Activated CD8-positive, alpha-beta memory T cell treated with anti-CD3 and anti-CD28 coated beads, Interleukin-2, amount 10 ng/mL, durations not matched to agents 7 days and 5 days (primary cell): ENCODE measurements at regions of chr13 and their contacts with region 1.

Region 1: GRCh38 chr13:95301183-95301967 is at the start of gene ABCC4:
- DNase-seq: peak; percentile 66
- ATAC-seq: peak; percentile 95
- H3K4me3 Mint-ChIP-seq: peak within 1 kb of the TSS; percentile 84
- H3K27ac Mint-ChIP-seq: no peak within 1 kb of the TSS
- H3K4me1 Mint-ChIP-seq: peaks cover 22% of the 10 kb centered on the region
- H3K27me3 Mint-ChIP-seq: peaks cover 12% of the 10 kb centered on the region
- total RNA-seq, gene ABCC4: 6.4 to 7.7 TPM

Region 2: GRCh38 chr13:95327190-95327589 is 25.8 kb after region 1 on chr13:
- CTCF ChIA-PET with region 1: no interaction called
- DNase-seq: no peak
- ATAC-seq: no peak
- H3K4me3 Mint-ChIP-seq: no peak overlapping the region
- H3K27ac Mint-ChIP-seq: no peak overlapping the region
- H3K4me1 Mint-ChIP-seq: no peaks in the 10 kb centered on the region
- H3K27me3 Mint-ChIP-seq: peaks cover 2% of the 10 kb centered on the region

Region 3: GRCh38 chr13:95378603-95379002 is 77.2 kb after region 1 on chr13:
- CTCF ChIA-PET with region 1: interaction called, 29 read pairs
- DNase-seq: no peak
- ATAC-seq: no peak
- H3K4me3 Mint-ChIP-seq: no peak overlapping the region
- H3K27ac Mint-ChIP-seq: no peak overlapping the region
- H3K4me1 Mint-ChIP-seq: peaks cover 4% of the 10 kb centered on the region
- H3K27me3 Mint-ChIP-seq: peaks cover 7% of the 10 kb centered on the region

Region 4: GRCh38 chr13:95471960-95472359 is 170.6 kb after region 1 on chr13:
- CTCF ChIA-PET with region 1: no interaction called
- DNase-seq: no peak
- ATAC-seq: no peak
- H3K4me3 Mint-ChIP-seq: no peak overlapping the region
- H3K27ac Mint-ChIP-seq: no peak overlapping the region
- H3K4me1 Mint-ChIP-seq: no peaks in the 10 kb centered on the region
- H3K27me3 Mint-ChIP-seq: peaks cover 7% of the 10 kb centered on the region